Transverse colon (tissue), 4 donors: ENCODE measurements at regions of chr11 and their contacts with region 1.

Region 1: GRCh38 chr11:44727373-44728287 is 868 bp downstream of the TSPAN18 start:
- DNase-seq: peak; percentile 78
- H3K4me3 ChIP-seq: peak overlapping the region; percentile 45 to 83 (median 63)
- H3K27ac ChIP-seq: peak overlapping the region; percentile 60 to 89 (median 79)
- H3K4me1 ChIP-seq: peaks cover 5 to 29% (median 13%) of the 10 kb centered on the region in 4 donors
- H3K27me3 ChIP-seq: peaks cover 53% of the 10 kb centered on the region
- CTCF ChIP-seq: peak; percentile 82 to 97 (median 96)
- EP300 ChIP-seq: no peak
- POLR2A ChIP-seq: no peak

Region 2: DNA sequence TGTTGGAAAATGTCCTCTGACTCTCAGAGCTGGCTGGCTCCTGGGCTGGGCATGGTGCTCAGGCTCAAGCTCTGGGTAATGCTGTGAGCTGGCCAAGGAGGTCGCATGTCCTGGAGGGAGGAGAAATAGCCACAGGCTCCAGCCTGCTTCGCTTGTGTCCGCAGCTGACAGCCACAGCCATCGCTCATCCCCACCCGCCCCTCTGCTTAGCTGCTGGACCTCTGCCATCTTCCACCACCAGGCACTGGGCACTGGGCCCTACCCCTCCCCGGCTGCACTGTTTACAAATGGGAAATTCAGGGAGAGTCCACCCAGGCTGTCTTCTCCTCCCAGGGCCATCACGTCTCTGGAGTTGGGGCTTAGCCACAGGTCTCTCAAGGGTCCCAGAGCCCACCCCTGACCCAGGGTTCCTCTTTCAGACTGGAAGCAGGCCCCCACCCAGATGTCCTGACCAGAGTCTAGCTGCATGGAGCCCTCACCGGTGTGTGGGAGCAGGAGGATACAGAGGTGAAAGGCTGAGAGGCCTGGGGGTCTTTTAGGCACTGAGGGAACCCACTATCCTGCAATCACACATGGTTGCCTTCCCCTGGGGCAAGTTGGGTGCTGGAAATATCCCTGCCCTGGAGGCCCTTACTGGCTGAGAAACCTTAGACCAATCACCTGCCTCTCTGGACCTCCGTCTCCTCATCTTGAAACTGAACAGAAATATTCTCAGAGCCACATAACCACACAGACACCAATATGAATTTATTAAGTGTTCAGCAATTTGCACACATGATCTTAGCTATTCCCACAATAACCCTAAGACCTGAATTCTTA is 99.5 kb before region 1 on chr11:
- in situ Hi-C with region 1: no loop called
- intact Hi-C with region 1: loop called (anchors 5 kb)
- DNase-seq: peak; percentile 53
- H3K4me3 ChIP-seq: no peak overlapping the region
- H3K27ac ChIP-seq: peak overlapping the region; percentile 28 to 74 (median 61)
- H3K4me1 ChIP-seq: peaks cover 0 to 17% (median 7%) of the 10 kb centered on the region in 4 donors
- H3K27me3 ChIP-seq: peaks cover 12% of the 10 kb centered on the region
- CTCF ChIP-seq: no peak
- EP300 ChIP-seq: no peak
- POLR2A ChIP-seq: no peak

Region 3: DNA sequence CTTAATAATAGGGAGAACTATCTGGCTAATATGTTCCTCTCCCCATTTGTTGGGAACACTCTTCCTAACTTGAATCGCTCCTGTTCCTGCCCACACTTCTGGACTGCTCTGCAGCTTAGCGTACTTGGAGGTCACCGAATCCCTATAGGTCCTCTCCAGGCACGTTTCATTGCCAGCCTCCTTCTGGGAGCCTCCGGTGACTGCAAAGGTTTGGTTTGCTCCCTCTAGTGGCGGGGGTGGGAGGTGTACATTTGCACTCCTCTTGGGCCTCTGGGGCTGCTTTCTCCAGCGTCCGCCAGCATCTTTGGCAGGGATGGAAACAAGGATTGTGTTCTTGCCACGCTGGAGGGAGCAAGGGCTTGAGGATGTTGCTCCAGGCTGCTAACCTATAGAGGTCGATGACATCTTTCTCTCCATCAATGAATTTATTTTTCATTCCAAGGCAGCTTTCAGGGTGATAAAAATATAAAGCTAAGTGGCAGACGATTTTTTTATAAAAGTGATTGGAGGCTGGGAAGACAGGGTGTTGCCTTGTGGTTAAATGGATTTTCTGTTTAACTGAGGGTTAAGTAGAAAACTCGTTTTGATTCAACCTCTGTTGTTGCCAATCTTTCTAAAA is 47.8 kb after region 1 on chr11:
- in situ Hi-C with region 1: no loop called
- intact Hi-C with region 1: loop called (anchors 5 kb)
- DNase-seq: peak; percentile 66
- H3K4me3 ChIP-seq: no peak overlapping the region
- H3K27ac ChIP-seq: peak overlapping the region in 3 of 4 donors; percentile 69 to 86 (median 85)
- H3K4me1 ChIP-seq: peaks cover 0 to 24% (median 10%) of the 10 kb centered on the region in 4 donors
- H3K27me3 ChIP-seq: peaks cover 17% of the 10 kb centered on the region
- CTCF ChIP-seq: peak; percentile 69 to 79 (median 74)
- EP300 ChIP-seq: no peak
- POLR2A ChIP-seq: no peak

Region 4: GRCh38 chr11:44893846-44894617 is 166.4 kb after region 1 on chr11:
- in situ Hi-C with region 1: loop called in 2 of 4 experiments (anchors 5 to 25 kb)
- intact Hi-C with region 1: loop called (anchors 1 kb)
- DNase-seq: peak; percentile 58
- H3K4me3 ChIP-seq: no peak overlapping the region
- H3K27ac ChIP-seq: peak overlapping the region; percentile 48 to 81 (median 68)
- H3K4me1 ChIP-seq: peaks cover 0 to 7% (median 3%) of the 10 kb centered on the region in 4 donors
- H3K27me3 ChIP-seq: peaks cover 3% of the 10 kb centered on the region
- CTCF ChIP-seq: peak; percentile 70 to 78 (median 78)
- EP300 ChIP-seq: no peak
- POLR2A ChIP-seq: no peak